Pancreas (tissue), 10 donors: ENCODE measurements at regions of chr2 and their contacts with region 1.

Region 1: DNA sequence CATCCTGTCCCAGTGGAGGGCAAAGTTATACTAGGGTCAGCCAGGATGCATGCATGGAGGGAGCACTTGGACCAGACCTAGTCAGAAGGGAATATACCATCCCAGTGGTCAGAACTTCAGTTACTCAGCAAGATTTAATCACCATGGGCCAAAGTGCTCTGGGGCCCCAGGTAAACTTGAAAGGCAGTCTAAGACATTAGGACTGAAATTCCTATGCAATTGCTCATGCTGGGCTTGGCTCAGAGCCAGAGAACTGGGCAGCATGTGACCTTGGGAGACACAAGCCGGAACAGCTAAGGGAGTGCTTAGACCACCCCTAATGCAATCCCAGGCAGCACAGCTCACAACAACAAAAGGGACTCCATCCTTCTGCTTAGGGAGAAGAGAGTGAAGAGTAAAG is 401.3 kb downstream of the KCNJ3 start:
- DNase-seq: peak in 2 of 6 donors; percentile 10 to 19
- ATAC-seq: no peak
- H3K4me3 ChIP-seq: no peak overlapping the region
- H3K27ac ChIP-seq: no peak overlapping the region
- H3K4me1 ChIP-seq: no peaks in the 10 kb centered on the region
- H3K27me3 ChIP-seq: no peaks in the 10 kb centered on the region
- CTCF ChIP-seq: no peak

Region 2: DNA sequence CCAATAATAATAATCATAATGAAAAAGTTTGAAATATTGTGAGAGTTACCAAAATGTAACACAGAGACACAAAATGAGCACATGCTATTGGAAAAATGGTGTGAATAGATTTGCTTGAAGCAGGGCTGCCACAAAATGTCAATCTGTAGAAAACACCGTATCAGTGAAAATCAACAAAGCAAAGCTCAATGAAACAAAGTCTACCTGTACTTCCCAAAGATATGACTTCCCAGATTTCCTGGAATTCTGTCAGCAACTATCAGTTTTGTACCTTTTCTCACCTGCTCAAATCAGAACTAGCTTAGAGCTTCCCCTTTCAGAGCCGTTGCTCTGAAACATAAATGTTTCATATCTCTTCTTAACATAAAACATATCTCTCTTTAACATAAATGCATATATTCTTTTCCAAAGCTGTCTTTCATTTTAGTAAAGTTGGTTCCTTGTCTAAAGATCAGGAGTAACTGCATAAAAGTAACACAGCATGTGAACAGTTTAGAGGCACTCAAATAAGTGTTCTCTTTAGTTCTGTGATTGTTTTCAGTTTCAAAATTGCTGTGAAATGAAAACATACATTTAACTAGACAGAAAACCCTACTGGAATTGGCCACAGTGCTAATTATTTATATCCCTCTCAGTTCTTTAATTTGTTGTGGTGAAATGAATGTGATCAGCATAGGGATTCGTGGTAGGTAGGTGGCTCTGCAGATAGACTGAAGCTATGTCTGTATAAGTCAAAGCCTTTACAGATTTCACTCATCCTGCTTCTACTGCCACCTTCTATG is 138.8 kb before region 1 on chr2:
- intact Hi-C with region 1: loop called in 1 of 3 experiments (anchors 5 kb)
- DNase-seq: no peak
- ATAC-seq: no peak
- H3K4me3 ChIP-seq: no peak overlapping the region
- H3K27ac ChIP-seq: no peak overlapping the region
- H3K4me1 ChIP-seq: no peaks in the 10 kb centered on the region
- H3K27me3 ChIP-seq: no peaks in the 10 kb centered on the region
- CTCF ChIP-seq: no peak